MCF 10A (cell line): ENCODE measurements at regions of chr12 and their contacts with region 1.

Region 1: GRCh38 chr12:100593490-100593889 is 20.0 kb downstream of the GAS2L3 start:
- DNase-seq: peak; percentile 6
- H3K4me3 Mint-ChIP-seq: peak overlapping the region; percentile 68
- H3K27ac Mint-ChIP-seq: peak overlapping the region; percentile 80
- H3K4me1 Mint-ChIP-seq: peaks cover 20% of the 10 kb centered on the region
- H3K27me3 Mint-ChIP-seq: no peaks in the 10 kb centered on the region
- CTCF ChIP-seq: no peak

Region 2: DNA sequence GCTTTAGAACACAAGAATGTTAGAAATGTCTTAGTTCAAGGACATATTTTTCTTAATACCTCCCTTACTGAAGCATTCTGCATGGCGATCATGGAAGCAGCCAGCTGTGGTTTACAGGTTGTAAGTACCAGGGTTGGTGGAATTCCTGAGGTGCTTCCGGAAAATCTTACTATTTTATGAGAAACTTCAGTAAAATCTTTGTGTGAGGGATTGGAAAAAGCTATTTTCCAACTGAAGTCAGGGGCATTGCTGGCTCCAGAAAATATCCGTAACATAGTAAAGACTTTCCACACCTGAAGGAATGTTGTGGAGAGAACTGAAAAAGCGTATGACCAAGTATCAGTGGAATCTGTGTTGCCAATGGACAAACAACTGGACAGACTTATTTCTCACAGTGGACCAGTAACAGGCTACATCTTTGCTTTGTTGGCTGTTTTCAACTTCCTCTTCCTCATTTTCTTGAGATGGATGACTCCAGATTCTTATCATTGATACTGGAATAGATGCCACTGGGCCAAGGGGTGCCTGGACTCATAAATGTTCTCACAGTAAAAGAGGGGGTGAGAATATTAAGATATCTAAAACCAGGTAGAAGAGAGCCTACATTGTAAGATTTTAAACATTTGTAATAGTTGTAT is 13.8 kb before region 1 on chr12:
- CTCF ChIA-PET with region 1: interaction called, 9 read pairs
- POLR2A ChIA-PET with region 1: interaction called, 16 read pairs
- intact Hi-C with region 1: no loop called
- DNase-seq: no peak
- H3K4me3 Mint-ChIP-seq: no peak overlapping the region
- H3K27ac Mint-ChIP-seq: no peak overlapping the region
- H3K4me1 Mint-ChIP-seq: peaks cover under 1% of the 10 kb centered on the region
- H3K27me3 Mint-ChIP-seq: no peaks in the 10 kb centered on the region
- CTCF ChIP-seq: no peak

Region 3: DNA sequence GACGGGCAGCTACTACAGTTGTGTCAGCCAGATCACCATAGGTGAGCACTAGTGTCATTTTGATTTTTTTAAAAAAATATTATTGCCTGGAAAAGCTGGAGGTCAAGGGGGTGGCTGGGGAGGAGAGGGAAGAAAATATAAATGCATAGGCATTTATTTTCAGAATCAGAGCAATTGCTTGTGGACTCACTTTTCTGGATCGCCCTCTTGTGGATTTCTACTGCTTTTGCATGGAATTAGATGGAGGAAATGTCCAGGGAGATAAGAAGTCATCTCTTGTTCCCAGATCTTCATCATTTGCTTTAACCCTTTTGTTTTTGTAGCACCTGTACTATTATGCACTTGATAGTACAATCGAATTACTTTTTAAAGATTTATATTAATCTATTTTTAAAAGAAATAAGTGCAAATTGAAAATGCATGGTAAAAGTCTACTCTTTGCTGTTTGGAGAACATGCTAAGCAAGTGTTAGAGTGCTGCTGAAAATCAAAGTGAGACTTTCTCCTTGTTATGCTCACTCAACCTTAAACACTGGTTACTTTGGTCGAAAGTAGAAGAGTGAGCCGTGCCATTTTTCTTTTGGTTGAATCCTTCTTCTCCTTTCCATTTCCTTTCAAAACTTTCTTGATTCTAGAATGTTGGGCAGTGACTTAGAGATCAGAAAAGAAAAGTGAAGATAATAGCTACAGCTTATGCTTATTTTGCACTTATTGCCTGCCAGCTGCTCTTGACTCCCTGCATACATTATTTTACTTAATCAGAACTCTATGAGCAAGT is 140.5 kb after region 1 on chr12:
- CTCF ChIA-PET with region 1: no interaction called
- POLR2A ChIA-PET with region 1: no interaction called
- intact Hi-C with region 1: no loop called
- DNase-seq: peak; percentile 51
- H3K4me3 Mint-ChIP-seq: no peak overlapping the region
- H3K27ac Mint-ChIP-seq: no peak overlapping the region
- H3K4me1 Mint-ChIP-seq: no peaks in the 10 kb centered on the region
- H3K27me3 Mint-ChIP-seq: peaks cover 59% of the 10 kb centered on the region
- CTCF ChIP-seq: peak; percentile 74